ENCODE measurements at regions of chr4 and their contacts with region 1.

Region 1: GRCh38 chr4:38132107-38132673 is 172.0 kb downstream of the PTTG2 start:
- DNase-seq: peak; percentile 83
- ATAC-seq: peak; percentile 81
- H3K4me3 Mint-ChIP-seq: peak overlapping the region; percentile 51
- H3K27ac Mint-ChIP-seq: peak overlapping the region; percentile 85
- H3K4me1 Mint-ChIP-seq: peaks cover 63% of the 10 kb centered on the region
- H3K27me3 Mint-ChIP-seq: no peaks in the 10 kb centered on the region

Region 2: DNA sequence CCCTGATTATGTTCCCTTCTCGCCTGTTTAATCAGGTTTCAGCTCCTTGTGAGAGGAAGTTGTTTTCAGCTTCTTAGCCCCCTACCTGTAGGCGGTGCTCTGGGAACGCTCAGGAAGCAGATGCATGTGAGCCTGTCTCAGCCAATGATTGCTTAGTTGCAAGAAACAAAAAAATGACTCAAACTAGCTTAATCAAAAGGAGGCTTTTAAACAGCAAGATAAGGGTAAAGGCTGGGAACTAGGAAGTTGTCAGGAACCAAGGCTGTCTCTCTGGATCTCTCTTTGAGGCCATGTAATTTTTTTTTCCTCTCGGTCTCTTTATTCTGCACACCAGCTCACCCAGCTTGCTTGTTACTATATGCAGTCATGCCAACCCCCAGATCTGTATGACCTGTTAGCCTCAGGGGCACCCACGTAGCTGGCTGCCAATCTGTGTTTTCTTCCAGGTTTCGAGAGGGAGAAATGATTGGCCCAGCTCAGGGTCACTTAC is 62.9 kb before region 1 on chr4:
- CTCF ChIA-PET with region 1: interaction called, 11 read pairs
- POLR2A ChIA-PET with region 1: interaction called, 3 read pairs
- DNase-seq: peak; percentile 29
- ATAC-seq: no peak
- H3K4me3 Mint-ChIP-seq: no peak overlapping the region
- H3K27ac Mint-ChIP-seq: peak overlapping the region; percentile 15
- H3K4me1 Mint-ChIP-seq: peaks cover 19% of the 10 kb centered on the region
- H3K27me3 Mint-ChIP-seq: no peaks in the 10 kb centered on the region

Region 3: GRCh38 chr4:38154681-38155608 is 22.8 kb after region 1 on chr4:
- CTCF ChIA-PET with region 1: interaction called, 14 read pairs
- POLR2A ChIA-PET with region 1: interaction called, 4 read pairs
- DNase-seq: peak; percentile 33
- ATAC-seq: peak; percentile 54
- H3K4me3 Mint-ChIP-seq: no peak overlapping the region
- H3K27ac Mint-ChIP-seq: peak overlapping the region; percentile 60
- H3K4me1 Mint-ChIP-seq: peaks cover 34% of the 10 kb centered on the region
- H3K27me3 Mint-ChIP-seq: peaks cover 4% of the 10 kb centered on the region

Region 4: DNA sequence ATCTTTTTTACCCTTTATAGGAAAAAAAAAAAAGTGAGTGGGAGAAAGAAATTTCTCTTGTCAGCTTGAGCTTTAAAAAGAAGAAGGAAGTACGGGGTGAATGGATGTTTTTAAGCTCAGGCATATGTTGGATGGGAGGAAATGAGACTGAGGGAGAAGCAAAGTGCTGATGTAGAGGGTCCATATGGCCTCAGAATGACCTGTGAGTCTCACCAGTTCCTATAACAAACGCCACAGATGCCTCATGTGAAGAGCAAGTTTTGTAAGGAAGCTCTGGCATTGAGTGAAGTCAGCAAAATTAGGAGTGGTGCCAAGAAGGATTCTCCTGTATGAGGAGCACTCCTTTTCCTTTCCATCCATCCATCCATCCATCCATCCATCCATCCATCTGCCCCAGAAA is 42.6 kb after region 1 on chr4:
- CTCF ChIA-PET with region 1: interaction called, 11 read pairs
- POLR2A ChIA-PET with region 1: no interaction called
- DNase-seq: no peak
- ATAC-seq: no peak
- H3K4me3 Mint-ChIP-seq: no peak overlapping the region
- H3K27ac Mint-ChIP-seq: no peak overlapping the region
- H3K4me1 Mint-ChIP-seq: peaks cover 36% of the 10 kb centered on the region
- H3K27me3 Mint-ChIP-seq: peaks cover 12% of the 10 kb centered on the region

Region 5: GRCh38 chr4:38302910-38303309 is 170.7 kb after region 1 on chr4:
- CTCF ChIA-PET with region 1: no interaction called
- POLR2A ChIA-PET with region 1: no interaction called
- DNase-seq: no peak
- ATAC-seq: no peak
- H3K4me3 Mint-ChIP-seq: no peak overlapping the region
- H3K27ac Mint-ChIP-seq: no peak overlapping the region
- H3K4me1 Mint-ChIP-seq: peaks cover 25% of the 10 kb centered on the region
- H3K27me3 Mint-ChIP-seq: no peaks in the 10 kb centered on the region

Measured in activated CD8-positive, alpha-beta T cell treated with anti-CD3 and anti-CD28 coated beads, Interleukin-2, amount 10 ng/mL, durations not matched to agents 7 days and 5 days (primary cell).